Posterior vena cava (tissue), 2 donors: ENCODE measurements at regions of chr10 and their contacts with region 1.

Region 1: GRCh38 chr10:121910673-121911420 is 17.0 kb downstream of the ATE1 start:
- DNase-seq: no peak

Region 2: DNA sequence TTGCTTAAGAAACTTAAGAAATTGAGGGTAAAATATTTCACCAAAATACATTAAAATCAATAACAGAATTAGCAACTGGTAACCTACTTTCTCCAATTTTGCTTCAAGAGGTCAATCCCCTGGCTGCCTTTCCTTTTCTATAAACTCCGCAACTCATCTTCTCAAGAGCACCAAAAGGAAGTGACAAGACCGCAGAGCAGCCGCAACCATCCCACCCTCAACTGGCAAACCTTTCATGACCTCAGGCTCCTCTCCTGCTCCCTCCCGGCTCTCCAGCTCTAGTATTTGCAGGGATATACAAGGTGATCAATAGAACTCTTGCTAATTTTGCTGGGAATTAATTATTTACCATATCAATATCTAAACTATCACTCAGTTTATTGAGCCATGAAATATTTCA is 71.9 kb before region 1 on chr10:
- intact Hi-C with region 1: loop called in 1 of 2 experiments (anchors 2 kb)
- DNase-seq: no peak

Region 3: DNA sequence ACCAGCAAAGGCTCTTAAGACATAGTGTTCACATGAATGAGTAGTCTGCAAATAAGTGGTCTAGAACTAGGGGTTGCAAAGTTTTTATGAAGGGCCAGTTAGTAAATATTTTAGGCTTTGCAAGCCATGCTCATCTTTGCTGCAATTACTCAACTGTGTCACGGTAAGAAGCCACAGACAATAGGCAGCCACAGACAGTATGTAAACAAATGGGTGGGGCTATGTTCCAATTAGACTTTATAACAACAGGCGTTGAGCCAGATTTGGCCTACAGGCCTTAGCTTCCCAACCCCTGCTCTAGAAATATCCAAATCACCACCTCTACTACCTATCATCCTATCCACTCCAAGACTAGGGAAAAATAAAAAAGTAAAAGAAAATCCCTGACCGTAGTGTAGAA is 1088.5 kb after region 1 on chr10:
- intact Hi-C with region 1: no loop called
- DNase-seq: no peak